CD8-positive, alpha-beta T cell (primary cell): ENCODE measurements at regions of chr9 and their contacts with region 1.

Region 1: GRCh38 chr9:104991144-104991953 is 63.4 kb upstream of the ABCA1 start:
- DNase-seq: peak; percentile 58 to 93 (median 81)
- ATAC-seq: peak; percentile 72
- H3K4me3 ChIP-seq: peak overlapping the region; percentile 73 to 81
- H3K4me3 Mint-ChIP-seq: peak overlapping the region; percentile 89
- H3K27ac ChIP-seq: peak overlapping the region; percentile 78 to 87
- H3K27ac Mint-ChIP-seq: peak overlapping the region; percentile 96
- H3K4me1 ChIP-seq: peaks cover 38% of the 10 kb centered on the region
- H3K4me1 Mint-ChIP-seq: peaks cover 38% of the 10 kb centered on the region
- H3K27me3 ChIP-seq: peaks cover 0 to 2% of the 10 kb centered on the region in 2 experiments
- H3K27me3 Mint-ChIP-seq: peaks cover 4% of the 10 kb centered on the region
- CTCF ChIP-seq: no peak

Region 2: DNA sequence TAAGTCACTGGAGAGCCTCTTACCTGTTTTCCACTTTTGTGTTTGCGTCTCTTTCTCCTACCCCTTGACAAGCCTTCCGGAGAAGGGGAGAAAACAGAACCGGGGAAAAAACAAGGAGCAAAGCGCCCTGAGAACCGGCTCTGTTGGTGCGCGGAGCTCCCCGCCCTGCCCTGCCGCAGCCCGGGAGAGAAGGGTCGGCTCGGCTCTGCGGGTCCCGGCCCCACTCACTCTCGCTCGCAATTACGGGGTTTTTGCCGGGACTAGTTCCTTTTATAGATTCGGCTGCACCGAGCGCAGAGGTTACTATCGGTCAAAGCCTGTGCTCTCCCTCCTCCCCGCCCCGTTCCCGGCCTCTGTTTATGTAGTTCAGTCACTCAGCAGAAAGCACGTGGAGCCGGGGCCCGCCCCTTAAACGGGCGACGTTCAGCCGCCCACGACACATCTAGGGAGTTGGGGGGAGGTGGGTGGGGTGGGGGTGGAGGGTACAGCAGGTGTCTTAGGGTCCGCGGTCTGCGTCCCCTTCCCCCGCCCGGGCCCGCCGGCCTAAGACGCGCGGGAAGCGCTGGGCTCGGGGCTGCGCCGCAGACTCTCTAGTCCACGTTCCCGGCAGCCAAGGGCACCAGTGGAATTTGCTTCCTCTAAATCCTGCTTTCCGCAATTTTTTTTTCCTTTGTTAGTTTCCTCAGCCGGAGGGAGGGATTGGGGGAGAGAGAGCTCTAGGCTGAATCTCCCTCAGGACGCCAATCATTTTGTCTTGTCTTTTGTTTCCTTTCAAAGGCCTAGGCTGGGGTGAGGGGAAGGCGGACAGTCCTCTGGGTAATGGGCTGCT is 63.2 kb before region 1 on chr9 and contains the start of gene ABCA1:
- CTCF ChIA-PET with region 1: no interaction called
- POLR2A ChIA-PET with region 1: interaction called, 3 read pairs
- intact Hi-C with region 1: loop called (anchors 1 to 2 kb)
- DNase-seq: peak; percentile 42 to 87 (median 65)
- ATAC-seq: peak; percentile 78
- H3K4me3 ChIP-seq: peak within 1 kb of the TSS; percentile 56 to 71
- H3K4me3 Mint-ChIP-seq: peak within 1 kb of the TSS; percentile 91
- H3K27ac ChIP-seq: no peak within 1 kb of the TSS
- H3K27ac Mint-ChIP-seq: peak within 1 kb of the TSS; percentile 80
- H3K4me1 ChIP-seq: peaks cover 19% of the 10 kb centered on the region
- H3K4me1 Mint-ChIP-seq: peaks cover 15% of the 10 kb centered on the region
- H3K27me3 ChIP-seq: peaks cover 0 to 24% of the 10 kb centered on the region in 2 experiments
- H3K27me3 Mint-ChIP-seq: peaks cover 11% of the 10 kb centered on the region
- CTCF ChIP-seq: no peak
- total RNA-seq, gene ABCA1: 11.2 to 11.4 TPM

Region 3: DNA sequence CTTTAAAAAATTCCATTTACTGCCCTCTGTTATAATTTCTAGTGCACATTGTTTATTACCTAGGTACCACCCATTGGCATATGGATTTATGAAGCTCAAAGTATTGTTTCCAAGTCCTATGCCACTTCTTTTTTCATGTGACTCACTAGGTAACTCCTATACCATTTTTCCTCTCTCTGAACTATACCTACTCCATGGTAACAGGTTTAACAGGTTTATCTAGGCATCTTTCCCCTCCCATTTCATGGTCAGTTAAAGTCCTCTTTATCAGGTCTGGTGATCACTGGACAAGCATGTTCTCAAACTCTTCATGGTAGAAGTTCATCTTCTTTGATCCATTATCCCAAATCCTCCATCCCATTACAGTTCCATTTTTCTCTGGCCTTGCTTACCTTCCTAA is 13.7 kb before region 1 on chr9:
- CTCF ChIA-PET with region 1: no interaction called
- POLR2A ChIA-PET with region 1: no interaction called
- intact Hi-C with region 1: no loop called
- DNase-seq: no peak
- ATAC-seq: no peak
- H3K4me3 ChIP-seq: no peak overlapping the region
- H3K4me3 Mint-ChIP-seq: no peak overlapping the region
- H3K27ac ChIP-seq: no peak overlapping the region
- H3K27ac Mint-ChIP-seq: no peak overlapping the region
- H3K4me1 ChIP-seq: no peaks in the 10 kb centered on the region
- H3K4me1 Mint-ChIP-seq: peaks cover 7% of the 10 kb centered on the region
- H3K27me3 ChIP-seq: no peaks in the 10 kb centered on the region
- H3K27me3 Mint-ChIP-seq: no peaks in the 10 kb centered on the region
- CTCF ChIP-seq: no peak

Region 4: DNA sequence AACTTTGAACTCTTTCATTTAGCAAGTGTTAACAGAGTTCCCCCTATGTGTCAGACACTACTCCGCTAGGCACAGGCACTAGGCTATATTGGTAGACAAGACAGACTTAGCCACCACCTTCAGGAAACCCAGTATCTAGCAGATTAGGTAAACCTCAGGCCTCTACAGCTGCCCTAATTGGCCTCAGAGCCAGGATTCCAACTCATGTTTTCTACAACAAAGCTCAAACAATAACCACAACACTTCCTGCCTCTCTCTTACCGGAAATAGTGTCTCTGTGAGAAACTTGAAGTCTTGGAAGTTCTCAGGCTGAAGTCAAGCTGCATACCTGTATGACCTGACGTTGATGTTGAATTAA is 136.5 kb after region 1 on chr9:
- CTCF ChIA-PET with region 1: no interaction called
- POLR2A ChIA-PET with region 1: no interaction called
- intact Hi-C with region 1: loop called (anchors 1 to 2 kb)
- DNase-seq: peak; percentile 25 to 89 (median 58)
- ATAC-seq: peak; percentile 99
- H3K4me3 ChIP-seq: peak overlapping the region in 1 of 2 experiments; percentile 6
- H3K4me3 Mint-ChIP-seq: peak overlapping the region; percentile 56
- H3K27ac ChIP-seq: no peak overlapping the region
- H3K27ac Mint-ChIP-seq: peak overlapping the region; percentile 46
- H3K4me1 ChIP-seq: peaks cover 40% of the 10 kb centered on the region
- H3K4me1 Mint-ChIP-seq: peaks cover 48% of the 10 kb centered on the region
- H3K27me3 ChIP-seq: no peaks in the 10 kb centered on the region
- H3K27me3 Mint-ChIP-seq: peaks cover 2% of the 10 kb centered on the region
- CTCF ChIP-seq: peak; percentile 23

Region 5: GRCh38 chr9:105557771-105558610 is 566.6 kb after region 1 on chr9 and contains the start of gene FKTN:
- CTCF ChIA-PET with region 1: no interaction called
- POLR2A ChIA-PET with region 1: no interaction called
- intact Hi-C with region 1: loop called in 1 of 2 experiments (anchors 10 kb)
- DNase-seq: peak; percentile 64 to 86 (median 81)
- ATAC-seq: peak; percentile 96
- H3K4me3 ChIP-seq: peak within 1 kb of the TSS; percentile 72 to 93
- H3K4me3 Mint-ChIP-seq: peak within 1 kb of the TSS; percentile 96
- H3K27ac ChIP-seq: peak within 1 kb of the TSS; percentile 45 to 69
- H3K27ac Mint-ChIP-seq: peak within 1 kb of the TSS; percentile 80
- H3K4me1 ChIP-seq: peaks cover 8% of the 10 kb centered on the region
- H3K4me1 Mint-ChIP-seq: peaks cover 19% of the 10 kb centered on the region
- H3K27me3 ChIP-seq: no peaks in the 10 kb centered on the region
- H3K27me3 Mint-ChIP-seq: no peaks in the 10 kb centered on the region
- CTCF ChIP-seq: no peak
- total RNA-seq, gene FKTN: 2.1 to 3.2 TPM